Cardiac septum (tissue), 1 donor: ENCODE measurements at regions of chr3 and their contacts with region 1.

Region 1: DNA sequence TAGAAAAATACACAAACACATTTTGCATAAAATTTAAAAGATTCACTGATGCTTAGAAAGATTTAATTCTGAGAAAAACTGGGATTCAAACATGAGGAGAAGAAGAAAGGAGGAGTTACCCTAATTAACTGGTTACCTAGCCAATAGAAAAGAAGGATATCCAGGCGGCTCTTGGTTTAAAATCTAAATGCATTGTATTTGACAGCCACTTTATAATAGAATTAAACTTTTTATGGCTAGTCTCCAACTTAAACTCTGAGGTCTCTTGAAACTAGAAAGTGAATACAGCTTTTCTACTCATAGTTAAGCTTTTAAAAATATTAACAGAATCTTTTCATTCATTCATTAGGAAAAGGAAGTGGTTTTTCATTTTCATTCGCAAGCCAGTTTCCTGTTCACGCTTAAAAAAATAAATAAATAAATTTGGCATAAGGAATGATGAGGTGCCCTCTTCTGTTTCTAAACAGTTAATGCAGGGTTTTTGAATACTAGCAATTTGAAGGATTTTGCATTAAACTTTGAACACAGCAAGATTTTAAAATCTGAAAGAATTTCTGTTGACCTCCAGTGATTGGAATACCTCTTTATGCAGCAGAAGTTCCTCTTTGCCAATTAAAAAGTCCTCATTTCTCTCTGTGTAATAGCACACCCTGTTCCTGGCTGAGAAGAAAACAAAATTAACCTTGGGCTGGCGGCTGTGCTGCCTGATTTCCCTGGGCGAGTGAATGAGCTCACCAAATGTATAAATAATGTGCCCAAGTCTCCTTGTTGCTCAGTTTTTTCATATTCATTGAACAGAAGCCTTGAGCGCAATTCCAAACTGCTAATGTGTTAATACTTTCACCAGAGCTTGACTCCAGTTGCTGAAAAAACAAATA is 105.1 kb downstream of the ZMAT3 start:
- DNase-seq: no peak

Region 2: GRCh38 chr3:178436773-178437172 is 529.8 kb before region 1 on chr3:
- intact Hi-C with region 1: loop called (anchors 2 kb)
- DNase-seq: no peak

Region 3: GRCh38 chr3:179005706-179006105 is 39.2 kb after region 1 on chr3:
- intact Hi-C with region 1: no loop called
- DNase-seq: no peak

Region 4: GRCh38 chr3:179531576-179531975 is 565.0 kb after region 1 on chr3:
- intact Hi-C with region 1: no loop called
- DNase-seq: no peak